Sigmoid colon (tissue), 7 donors: ENCODE measurements at regions of chr14 and their contacts with region 1.

Region 1: GRCh38 chr14:23306410-23307145 is at the start of gene BCL2L2:
- DNase-seq: peak; percentile 97
- H3K4me3 ChIP-seq: peak within 1 kb of the TSS; percentile 63 to 86 (median 78)
- H3K27ac ChIP-seq: peak within 1 kb of the TSS; percentile 86 to 90 (median 88)
- H3K4me1 ChIP-seq: peaks cover 0 to 54% (median 49%) of the 10 kb centered on the region in 4 donors
- H3K27me3 ChIP-seq: no peaks in the 10 kb centered on the region
- CTCF ChIP-seq: no peak
- EP300 ChIP-seq: no peak
- POLR2A ChIP-seq: peak in 1 of 2 donors; percentile 77
- total RNA-seq, gene BCL2L2: 75.9 to 118 (median 101) TPM

Region 2: DNA sequence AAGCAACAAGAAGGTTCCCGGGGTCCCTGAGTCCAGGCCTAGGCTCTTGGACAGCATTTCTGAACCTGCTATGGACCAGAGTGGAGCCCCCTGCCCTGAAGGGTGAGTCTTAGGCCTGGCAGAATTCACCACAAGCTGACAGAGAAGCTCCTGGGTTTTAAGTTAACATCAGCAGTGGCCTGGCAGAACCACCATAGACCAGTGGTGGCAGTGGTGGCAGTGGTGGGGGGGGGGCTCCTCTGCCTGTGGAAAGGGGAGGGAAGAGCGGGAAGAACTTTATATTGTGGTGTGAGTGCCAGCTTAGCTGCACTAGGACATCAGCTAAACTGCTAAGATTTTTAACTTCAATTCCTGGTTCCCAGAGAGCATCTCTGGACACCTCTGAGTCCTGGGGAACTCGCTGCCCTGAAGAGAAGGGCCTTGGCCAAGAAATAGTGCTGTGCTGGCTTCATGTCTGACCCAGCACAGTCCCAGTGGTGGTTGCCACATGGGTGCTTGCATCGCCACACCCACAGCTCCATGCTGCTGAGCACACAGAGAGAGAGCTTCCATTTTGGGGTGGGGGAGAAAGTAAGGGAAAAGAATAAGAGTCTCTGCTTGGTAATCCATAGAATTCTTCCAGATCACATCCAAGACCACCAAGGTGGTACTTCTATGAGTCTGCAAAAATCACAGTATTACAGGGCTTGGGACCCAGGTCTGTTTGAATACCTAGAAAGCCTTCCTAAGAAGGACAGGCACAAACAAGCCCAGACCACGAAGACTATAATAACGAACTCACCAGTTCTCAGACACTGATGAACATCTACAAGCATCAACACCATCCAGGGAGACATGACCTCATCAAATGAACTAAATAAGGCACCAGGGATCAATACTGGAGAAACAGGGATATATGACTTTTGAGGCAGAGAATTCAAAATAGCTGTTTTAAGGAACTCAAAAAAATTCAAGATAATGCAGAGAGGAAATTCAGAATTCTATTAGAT is 89.3 kb before region 1 on chr14:
- intact Hi-C with region 1: no loop called
- DNase-seq: no peak
- H3K4me3 ChIP-seq: no peak overlapping the region
- H3K27ac ChIP-seq: no peak overlapping the region
- H3K4me1 ChIP-seq: no peaks in the 10 kb centered on the region
- H3K27me3 ChIP-seq: no peaks in the 10 kb centered on the region
- CTCF ChIP-seq: no peak
- EP300 ChIP-seq: no peak
- POLR2A ChIP-seq: no peak

Region 3: GRCh38 chr14:23320774-23321571 is 14.4 kb after region 1 on chr14 and contains the start of gene PABPN1:
- intact Hi-C with region 1: loop called (anchors 2 kb)
- DNase-seq: peak; percentile 100
- H3K4me3 ChIP-seq: peak within 1 kb of the TSS; percentile 95 to 99 (median 98)
- H3K27ac ChIP-seq: peak within 1 kb of the TSS; percentile 97 to 99 (median 98)
- H3K4me1 ChIP-seq: peaks cover 0 to 29% (median 21%) of the 10 kb centered on the region in 4 donors
- H3K27me3 ChIP-seq: no peaks in the 10 kb centered on the region
- CTCF ChIP-seq: no peak
- EP300 ChIP-seq: peak in 1 of 4 donors; percentile 24
- POLR2A ChIP-seq: peak in 1 of 2 donors; percentile 6
- total RNA-seq, gene PABPN1: 38.3 to 71.5 (median 48.3) TPM